ENCODE measurements at regions of chr9 and their contacts with region 1.

Region 1: DNA sequence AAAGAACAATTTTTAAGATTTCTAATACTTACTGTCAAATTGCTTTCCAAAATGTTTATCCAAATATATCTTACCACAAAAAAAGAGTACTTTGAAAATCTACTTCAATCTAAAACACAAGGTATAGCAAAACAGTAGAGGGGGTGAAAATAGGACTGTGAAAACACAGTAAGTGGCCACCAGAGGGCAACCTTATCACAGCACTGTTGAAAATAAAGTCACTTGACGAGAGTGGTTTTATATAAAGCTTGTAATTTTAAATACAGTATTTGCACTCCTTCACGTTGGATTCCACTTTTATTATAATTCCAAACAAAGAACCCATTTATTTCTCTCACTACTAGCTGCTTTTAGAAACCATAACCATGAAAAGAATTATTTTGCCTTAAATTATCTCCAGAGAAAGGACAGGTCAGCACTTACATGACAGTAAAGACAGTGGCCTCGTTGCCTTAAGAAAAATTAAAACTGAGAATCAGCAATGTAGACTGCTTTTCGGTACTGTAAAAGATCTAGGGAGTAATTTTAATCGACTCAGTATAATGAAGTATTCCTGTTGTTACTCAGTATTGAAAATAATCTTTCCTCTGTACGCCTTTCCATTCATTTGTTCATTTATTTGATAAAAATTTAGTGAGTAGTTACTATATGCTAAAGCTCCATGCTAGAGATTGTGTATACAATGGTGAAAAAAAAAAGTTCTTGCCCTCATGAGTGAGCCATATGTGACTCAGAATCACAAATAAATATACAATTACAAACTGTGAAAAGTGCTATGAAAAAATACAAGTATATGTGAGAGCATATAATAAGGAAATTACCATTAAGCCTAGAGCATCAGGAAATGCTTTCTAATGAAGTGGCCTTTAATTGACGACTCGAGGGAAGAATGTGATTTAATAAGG is 40.0 kb upstream of the CDK5RAP2 start:
- DNase-seq: peak; percentile 33
- H3K4me3 Mint-ChIP-seq: no peak overlapping the region
- H3K27ac Mint-ChIP-seq: no peak overlapping the region
- H3K4me1 Mint-ChIP-seq: peaks cover 8% of the 10 kb centered on the region
- H3K27me3 Mint-ChIP-seq: no peaks in the 10 kb centered on the region

Region 2: GRCh38 chr9:120714088-120714845 is 94.3 kb after region 1 on chr9 and contains the start of gene MEGF9:
- intact Hi-C with region 1: loop called (anchors 10 kb)
- DNase-seq: peak; percentile 96
- H3K4me3 Mint-ChIP-seq: peak within 1 kb of the TSS; percentile 87
- H3K27ac Mint-ChIP-seq: peak within 1 kb of the TSS; percentile 74
- H3K4me1 Mint-ChIP-seq: peaks cover 35% of the 10 kb centered on the region
- H3K27me3 Mint-ChIP-seq: no peaks in the 10 kb centered on the region
- total RNA-seq, gene MEGF9: 5.0 TPM in 2 replicates

Region 3: GRCh38 chr9:120742951-120743416 is 123.0 kb after region 1 on chr9:
- intact Hi-C with region 1: loop called (anchors 5 kb)
- DNase-seq: no peak
- H3K4me3 Mint-ChIP-seq: no peak overlapping the region
- H3K27ac Mint-ChIP-seq: no peak overlapping the region
- H3K4me1 Mint-ChIP-seq: no peaks in the 10 kb centered on the region
- H3K27me3 Mint-ChIP-seq: no peaks in the 10 kb centered on the region

Region 4: DNA sequence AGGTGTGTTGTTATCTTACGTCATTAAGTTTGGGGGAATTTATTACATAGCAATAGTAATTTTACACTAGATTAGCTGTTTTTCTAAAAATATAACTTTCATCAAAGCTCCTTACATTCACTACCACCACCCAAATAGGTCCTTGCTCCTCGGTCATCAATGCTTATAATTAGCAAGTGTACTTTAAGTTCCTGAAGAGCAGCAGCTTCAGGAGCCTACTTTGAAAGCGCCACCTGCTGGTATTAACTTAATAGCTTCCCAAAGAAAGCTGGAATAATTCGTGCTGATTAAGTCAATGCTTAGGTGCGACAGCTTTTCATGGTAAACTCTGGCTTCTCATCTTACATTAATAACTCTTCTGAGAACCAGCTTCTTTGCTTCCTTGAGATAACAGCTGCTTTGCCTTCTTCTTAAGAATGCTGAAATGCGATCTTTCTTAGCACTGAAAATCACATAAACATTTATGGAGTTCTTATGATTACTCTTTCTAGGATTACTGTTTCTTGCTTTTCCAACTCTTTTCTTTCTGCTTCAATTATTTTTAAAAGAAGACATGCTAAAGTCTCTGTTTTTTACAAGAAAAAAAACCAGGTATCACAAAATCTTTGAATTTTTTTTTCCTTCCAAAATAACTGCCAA is 440.1 kb after region 1 on chr9:
- intact Hi-C with region 1: loop called (anchors 10 kb)
- DNase-seq: no peak
- H3K4me3 Mint-ChIP-seq: no peak overlapping the region
- H3K27ac Mint-ChIP-seq: no peak overlapping the region
- H3K4me1 Mint-ChIP-seq: peaks cover 15% of the 10 kb centered on the region
- H3K27me3 Mint-ChIP-seq: peaks cover 2% of the 10 kb centered on the region

Measured in activated T-helper 2 cell treated with anti-CD3 and anti-CD28 coated beads, Interferon-gamma antibody, Interleukin-2, Interleukin-4, amounts not matched to agents 10 μg/mL and 5 μg/mL and 100 μg/mL, durations not matched to agents 14 hours and 24 hours and 36 hours (primary cell).